WTC11 (cell line): ENCODE measurements at regions of chr3 and their contacts with region 1.

Region 1: GRCh38 chr3:52820736-52821135 is 9.7 kb downstream of the ITIH4 start:
- DNase-seq: peak; percentile 76
- ATAC-seq: peak; percentile 93
- H3K4me3 Mint-ChIP-seq: no peak overlapping the region
- H3K27ac Mint-ChIP-seq: no peak overlapping the region
- H3K4me1 Mint-ChIP-seq: peaks cover 12% of the 10 kb centered on the region
- H3K27me3 Mint-ChIP-seq: no peaks in the 10 kb centered on the region
- CTCF ChIP-seq: peak; percentile 91

Region 2: GRCh38 chr3:52536369-52537164 is 284.2 kb before region 1 on chr3 and contains the start of gene UQCC5:
- CTCF ChIA-PET with region 1: no interaction called
- POLR2A ChIA-PET with region 1: no interaction called
- DNase-seq: peak; percentile 98
- ATAC-seq: peak; percentile 86
- H3K4me3 Mint-ChIP-seq: peak within 1 kb of the TSS; percentile 98
- H3K27ac Mint-ChIP-seq: peak within 1 kb of the TSS; percentile 99
- H3K4me1 Mint-ChIP-seq: peaks cover 51% of the 10 kb centered on the region
- H3K27me3 Mint-ChIP-seq: no peaks in the 10 kb centered on the region
- CTCF ChIP-seq: no peak
- total RNA-seq, gene UQCC5: 30.0 to 37.8 TPM (median 36.4 TPM) in 3 replicates

Region 3: DNA sequence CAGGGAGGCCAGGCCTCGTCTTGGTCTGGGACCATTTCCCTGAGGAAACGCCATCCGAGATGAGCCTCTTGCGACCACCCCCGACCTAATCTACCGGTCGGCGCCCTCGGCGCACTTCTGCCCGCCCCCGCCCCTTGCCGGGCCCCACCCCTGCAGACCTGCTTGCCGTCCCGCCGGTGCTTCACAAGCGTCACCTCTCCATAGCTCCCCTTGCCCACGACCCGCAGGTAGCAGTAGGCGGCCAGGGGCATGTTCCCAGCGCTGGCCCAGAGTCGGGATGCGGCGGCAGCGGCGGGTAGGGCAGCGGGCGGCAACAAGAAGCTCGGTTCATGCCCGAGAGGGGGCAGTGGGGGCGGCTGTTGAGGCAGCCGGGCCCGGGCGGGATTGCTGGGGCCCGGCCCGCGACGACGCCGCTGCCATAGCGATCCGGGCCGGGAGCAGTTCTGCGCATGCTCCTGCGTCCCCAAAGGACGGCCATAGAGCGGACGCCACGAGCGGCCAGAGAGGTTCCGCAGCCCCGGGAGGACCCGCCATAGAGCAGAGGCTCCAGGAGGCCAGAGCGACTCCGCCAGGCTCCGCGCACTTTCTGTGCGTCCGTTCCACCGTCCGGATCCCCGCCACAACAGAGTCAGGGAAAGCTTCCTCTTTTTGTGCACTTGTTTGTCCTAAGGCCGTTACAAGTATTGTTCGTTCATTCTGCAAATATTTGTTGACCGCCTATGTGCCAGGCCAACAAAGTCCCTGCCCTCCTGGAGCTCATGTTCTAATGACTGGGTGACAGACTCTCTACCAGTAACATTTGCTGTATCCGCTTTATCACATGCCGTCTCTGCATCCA is 50.0 kb before region 1 on chr3 and contains the start of gene NEK4:
- CTCF ChIA-PET with region 1: interaction called, 31 read pairs
- POLR2A ChIA-PET with region 1: no interaction called
- DNase-seq: peak; percentile 95
- ATAC-seq: peak; percentile 96
- H3K4me3 Mint-ChIP-seq: peak within 1 kb of the TSS; percentile 90
- H3K27ac Mint-ChIP-seq: peak within 1 kb of the TSS; percentile 95
- H3K4me1 Mint-ChIP-seq: peaks cover 6% of the 10 kb centered on the region
- H3K27me3 Mint-ChIP-seq: no peaks in the 10 kb centered on the region
- CTCF ChIP-seq: no peak
- total RNA-seq, gene NEK4: 30.3 to 31.4 TPM (median 31.2 TPM) in 3 replicates

Region 4: GRCh38 chr3:52798978-52799476 is 21.7 kb before region 1 on chr3:
- CTCF ChIA-PET with region 1: interaction called, 96 read pairs
- POLR2A ChIA-PET with region 1: no interaction called
- DNase-seq: peak; percentile 79
- ATAC-seq: peak; percentile 94
- H3K4me3 Mint-ChIP-seq: no peak overlapping the region
- H3K27ac Mint-ChIP-seq: no peak overlapping the region
- H3K4me1 Mint-ChIP-seq: no peaks in the 10 kb centered on the region
- H3K27me3 Mint-ChIP-seq: no peaks in the 10 kb centered on the region; the same call in 1 of the 2 replicates
- CTCF ChIP-seq: peak; percentile 64

Region 5: GRCh38 chr3:52831500-52832301 is 11.0 kb after region 1 on chr3:
- CTCF ChIA-PET with region 1: interaction called, 23 read pairs
- POLR2A ChIA-PET with region 1: no interaction called
- DNase-seq: no peak
- ATAC-seq: no peak
- H3K4me3 Mint-ChIP-seq: no peak overlapping the region
- H3K27ac Mint-ChIP-seq: no peak overlapping the region
- H3K4me1 Mint-ChIP-seq: peaks cover 5% of the 10 kb centered on the region; the same call in 1 of the 2 replicates
- H3K27me3 Mint-ChIP-seq: no peaks in the 10 kb centered on the region
- CTCF ChIP-seq: no peak

Region 6: GRCh38 chr3:52845691-52846431 is 25.1 kb after region 1 on chr3:
- CTCF ChIA-PET with region 1: interaction called, 18 read pairs
- POLR2A ChIA-PET with region 1: no interaction called
- DNase-seq: peak; percentile 47
- ATAC-seq: peak; percentile 67
- H3K4me3 Mint-ChIP-seq: no peak overlapping the region
- H3K27ac Mint-ChIP-seq: no peak overlapping the region
- H3K4me1 Mint-ChIP-seq: peaks cover 3% of the 10 kb centered on the region; the same call in 1 of the 2 replicates
- H3K27me3 Mint-ChIP-seq: no peaks in the 10 kb centered on the region
- CTCF ChIP-seq: peak; percentile 45

Region 7: GRCh38 chr3:52915294-52915693 is 94.6 kb after region 1 on chr3:
- CTCF ChIA-PET with region 1: no interaction called
- POLR2A ChIA-PET with region 1: no interaction called
- DNase-seq: no peak
- ATAC-seq: no peak
- H3K4me3 Mint-ChIP-seq: no peak overlapping the region
- H3K27ac Mint-ChIP-seq: no peak overlapping the region
- H3K4me1 Mint-ChIP-seq: no peaks in the 10 kb centered on the region
- H3K27me3 Mint-ChIP-seq: no peaks in the 10 kb centered on the region
- CTCF ChIP-seq: no peak